Heart left ventricle (tissue), 16 donors: ENCODE measurements at regions of chr20 and their contacts with region 1.

Region 1: GRCh38 chr20:59184880-59185447 is 21.3 kb downstream of the ZNF831 start:
- DNase-seq: no peak
- ATAC-seq: no peak
- H3K4me3 ChIP-seq: no peak overlapping the region
- H3K27ac ChIP-seq: no peak overlapping the region
- H3K4me1 ChIP-seq: peaks cover 0 to 2% (median 0%) of the 10 kb centered on the region in 12 donors
- H3K27me3 ChIP-seq: peaks cover 0 to 2% (median 0%) of the 10 kb centered on the region in 9 donors
- CTCF ChIP-seq: no peak
- POLR2A ChIP-seq: no peak

Region 2: DNA sequence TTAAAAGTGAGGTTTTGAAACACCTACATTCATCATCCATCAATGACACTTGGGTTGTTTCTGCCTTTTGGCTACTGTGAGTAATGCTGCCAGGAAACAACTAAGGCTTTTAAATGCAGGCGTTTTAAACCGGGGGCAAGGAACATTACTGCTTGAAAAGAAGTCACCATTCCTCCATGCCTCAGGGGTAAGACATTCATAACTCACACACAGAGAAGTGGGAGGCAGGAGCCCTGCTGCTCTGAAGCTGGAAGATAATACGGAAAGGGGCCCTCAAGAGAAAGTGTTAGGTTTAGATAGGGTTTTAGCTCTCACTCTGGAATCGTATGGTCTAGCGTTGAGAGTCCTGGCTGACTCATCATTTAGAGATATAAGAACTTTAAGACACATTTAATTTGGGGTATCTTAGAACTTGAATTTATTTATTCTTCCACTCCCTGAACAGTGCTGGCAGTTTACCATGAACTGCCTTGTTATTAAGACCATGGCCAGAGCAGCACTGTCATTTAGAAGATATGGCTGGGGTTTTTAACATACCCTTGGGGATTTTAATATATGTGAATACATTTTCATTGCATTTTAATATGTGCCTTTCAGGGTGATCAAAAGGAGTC is 163.9 kb before region 1 on chr20:
- intact Hi-C with region 1: no loop called
- DNase-seq: no peak
- ATAC-seq: no peak
- H3K4me3 ChIP-seq: no peak overlapping the region
- H3K27ac ChIP-seq: no peak overlapping the region
- H3K4me1 ChIP-seq: peaks cover 0 to 25% (median 12%) of the 10 kb centered on the region in 12 donors
- H3K27me3 ChIP-seq: no peaks in the 10 kb centered on the region
- CTCF ChIP-seq: no peak
- POLR2A ChIP-seq: no peak

Region 3: GRCh38 chr20:59102841-59103299 is 82.1 kb before region 1 on chr20:
- intact Hi-C with region 1: loop called in 1 of 10 experiments (anchors 5 kb)
- DNase-seq: no peak
- ATAC-seq: no peak
- H3K4me3 ChIP-seq: no peak overlapping the region
- H3K27ac ChIP-seq: no peak overlapping the region
- H3K4me1 ChIP-seq: peaks cover 0 to 4% (median 0%) of the 10 kb centered on the region in 12 donors
- H3K27me3 ChIP-seq: peaks cover 0 to 11% (median 0%) of the 10 kb centered on the region in 9 donors
- CTCF ChIP-seq: no peak
- POLR2A ChIP-seq: no peak

Region 4: GRCh38 chr20:59141787-59142581 is 43.0 kb before region 1 on chr20:
- intact Hi-C with region 1: loop called in 1 of 10 experiments (anchors 5 kb)
- DNase-seq: no peak
- ATAC-seq: no peak
- H3K4me3 ChIP-seq: no peak overlapping the region
- H3K27ac ChIP-seq: no peak overlapping the region
- H3K4me1 ChIP-seq: peaks cover 4 to 23% (median 14%) of the 10 kb centered on the region in 12 donors
- H3K27me3 ChIP-seq: no peaks in the 10 kb centered on the region
- CTCF ChIP-seq: no peak
- POLR2A ChIP-seq: no peak

Region 5: DNA sequence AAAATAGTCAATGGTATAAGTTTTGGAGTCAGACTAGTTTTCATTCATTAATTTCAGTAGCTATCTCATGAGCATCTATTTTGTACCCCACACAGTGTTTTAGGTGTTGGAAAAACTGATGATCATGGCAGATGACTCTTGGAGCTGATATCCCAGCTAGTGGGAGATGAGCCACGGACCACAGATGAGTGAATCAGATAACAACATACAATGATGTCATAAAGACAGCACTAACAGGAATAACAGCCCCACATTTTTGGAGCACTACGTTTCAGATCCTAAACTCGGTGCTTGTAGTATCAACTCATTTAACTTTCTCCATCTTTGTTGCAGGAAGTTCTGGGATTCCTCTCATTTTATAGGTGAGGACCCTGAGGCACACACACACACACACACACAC is 47.7 kb after region 1 on chr20:
- intact Hi-C with region 1: no loop called
- DNase-seq: no peak
- ATAC-seq: no peak
- H3K4me3 ChIP-seq: no peak overlapping the region
- H3K27ac ChIP-seq: no peak overlapping the region
- H3K4me1 ChIP-seq: no peaks in the 10 kb centered on the region
- H3K27me3 ChIP-seq: peaks cover 0 to 46% (median 14%) of the 10 kb centered on the region in 9 donors
- CTCF ChIP-seq: no peak
- POLR2A ChIP-seq: no peak